Endothelial cell of umbilical vein (primary cell): ENCODE measurements at regions of chr12 and their contacts with region 1.

Region 1: GRCh38 chr12:39365364-39366001 is 77.4 kb downstream of the KIF21A start:
- DNase-seq: no peak
- H3K4me3 ChIP-seq: no peak overlapping the region
- H3K27ac ChIP-seq: no peak overlapping the region
- H3K4me1 ChIP-seq: no peaks in the 10 kb centered on the region
- H3K27me3 ChIP-seq: no peaks in the 10 kb centered on the region
- CTCF ChIP-seq: no peak
- POLR2A ChIP-seq: no peak

Region 2: DNA sequence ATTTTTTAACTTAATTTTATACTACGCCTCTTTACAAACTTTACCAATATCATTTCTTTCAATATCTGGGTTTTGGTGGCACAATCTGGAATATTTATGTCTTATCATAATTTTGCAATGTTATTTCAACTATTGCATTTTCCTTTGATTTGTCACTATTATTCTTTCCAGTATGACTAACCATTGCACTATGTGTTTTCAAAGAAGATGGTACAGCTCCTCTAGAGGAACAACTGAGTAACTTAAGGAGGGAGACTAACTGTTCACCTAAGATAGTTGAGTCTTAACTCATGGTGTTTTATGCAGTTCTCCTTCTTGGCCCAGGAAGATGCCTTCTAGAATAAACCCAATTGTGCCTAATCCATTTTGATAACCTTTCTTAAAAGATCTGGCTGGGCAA is 138.0 kb after region 1 on chr12:
- CTCF ChIA-PET with region 1: interaction called, 3 read pairs
- POLR2A ChIA-PET with region 1: no interaction called
- dilution Hi-C with region 1: no loop called
- intact Hi-C with region 1: loop called (anchors 5 kb)
- DNase-seq: peak; percentile 48
- H3K4me3 ChIP-seq: no peak overlapping the region
- H3K27ac ChIP-seq: no peak overlapping the region
- H3K4me1 ChIP-seq: peaks cover 7% of the 10 kb centered on the region
- H3K27me3 ChIP-seq: no peaks in the 10 kb centered on the region
- CTCF ChIP-seq: peak in 1 of 2 donors; percentile 12
- POLR2A ChIP-seq: no peak

Region 3: DNA sequence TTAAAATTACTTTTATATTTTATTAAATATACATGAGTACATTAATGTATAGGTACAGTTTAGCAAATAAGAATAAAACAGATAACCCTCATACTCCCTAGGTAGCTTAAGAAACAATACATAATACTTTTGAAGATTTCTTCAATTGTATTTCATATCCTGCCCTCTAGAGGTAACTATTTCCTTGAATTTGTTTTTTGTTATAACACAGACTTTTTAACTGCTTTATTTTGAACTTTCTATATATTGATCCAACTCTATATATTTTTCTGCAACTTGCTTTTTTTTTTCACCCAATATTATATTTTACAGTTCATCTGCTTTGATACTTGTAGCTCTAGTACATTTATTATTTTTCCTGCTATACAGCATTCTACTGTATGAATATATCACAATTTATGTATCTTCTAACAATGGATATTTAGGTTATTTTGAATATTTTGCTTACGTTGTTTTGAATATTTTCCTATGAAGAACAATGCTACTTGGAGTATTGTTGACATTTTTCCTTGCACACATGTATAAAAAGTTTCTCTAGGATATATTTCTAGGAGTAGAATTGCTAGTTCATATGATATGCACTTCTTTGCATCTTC is 326.9 kb after region 1 on chr12:
- CTCF ChIA-PET with region 1: interaction called, 12 read pairs
- POLR2A ChIA-PET with region 1: no interaction called
- dilution Hi-C with region 1: no loop called
- intact Hi-C with region 1: no loop called
- DNase-seq: peak; percentile 5
- H3K4me3 ChIP-seq: no peak overlapping the region
- H3K27ac ChIP-seq: no peak overlapping the region
- H3K4me1 ChIP-seq: no peaks in the 10 kb centered on the region
- H3K27me3 ChIP-seq: no peaks in the 10 kb centered on the region
- CTCF ChIP-seq: no peak
- POLR2A ChIP-seq: no peak